HEK293 (cell line): ENCODE measurements at regions of chr2 and their contacts with region 1.

Region 1: GRCh38 chr2:174577967-174578589 is 19.5 kb downstream of the WIPF1 start:
- H3K4me3 ChIP-seq: no peak overlapping the region
- H3K27ac ChIP-seq: no peak overlapping the region
- H3K4me1 ChIP-seq: no peaks in the 10 kb centered on the region
- CTCF ChIP-seq: no peak; the same call in 1 of the 2 replicates

Region 2: DNA sequence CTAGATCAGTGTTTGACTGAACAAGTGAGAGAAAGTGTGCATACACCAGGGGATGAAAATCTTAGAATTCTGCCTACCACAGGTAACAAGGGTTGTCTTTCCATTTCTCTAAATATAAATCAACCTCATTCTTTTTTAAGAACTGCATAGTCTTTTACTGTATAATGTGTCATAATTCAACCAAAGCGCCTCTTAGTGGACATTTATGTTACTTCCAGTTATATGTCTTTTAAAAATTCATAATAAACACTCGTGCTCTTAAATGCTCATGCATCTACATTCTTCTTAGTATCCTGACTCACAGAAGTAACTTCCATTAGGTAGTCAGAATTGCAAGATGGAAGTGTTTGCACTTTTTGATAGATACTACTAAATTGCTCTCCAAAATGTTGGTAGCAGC is 110.0 kb after region 1 on chr2:
- CTCF ChIA-PET with region 1: interaction called, 23 read pairs
- POLR2A ChIA-PET with region 1: no interaction called
- H3K4me3 ChIP-seq: no peak overlapping the region
- H3K27ac ChIP-seq: no peak overlapping the region
- H3K4me1 ChIP-seq: no peaks in the 10 kb centered on the region
- CTCF ChIP-seq: no peak